Heart right ventricle (tissue), 16 donors: ENCODE measurements at regions of chr18 and their contacts with region 1.

Region 1: GRCh38 chr18:42969366-42969765 is 146.1 kb downstream of the RIT2 start:
- DNase-seq: no peak
- ATAC-seq: no peak
- H3K4me3 ChIP-seq: no peak overlapping the region
- H3K27ac ChIP-seq: no peak overlapping the region
- H3K4me1 ChIP-seq: no peaks in the 10 kb centered on the region
- H3K27me3 ChIP-seq: no peaks in the 10 kb centered on the region
- CTCF ChIP-seq: no peak

Region 2: GRCh38 chr18:42950732-42951131 is 18.6 kb before region 1 on chr18:
- intact Hi-C with region 1: loop called in 1 of 10 experiments (anchors 1 kb)
- DNase-seq: no peak
- ATAC-seq: no peak
- H3K4me3 ChIP-seq: no peak overlapping the region
- H3K27ac ChIP-seq: no peak overlapping the region
- H3K4me1 ChIP-seq: no peaks in the 10 kb centered on the region
- H3K27me3 ChIP-seq: no peaks in the 10 kb centered on the region
- CTCF ChIP-seq: no peak